ENCODE measurements at regions of chr4 and their contacts with region 1.

Region 1: DNA sequence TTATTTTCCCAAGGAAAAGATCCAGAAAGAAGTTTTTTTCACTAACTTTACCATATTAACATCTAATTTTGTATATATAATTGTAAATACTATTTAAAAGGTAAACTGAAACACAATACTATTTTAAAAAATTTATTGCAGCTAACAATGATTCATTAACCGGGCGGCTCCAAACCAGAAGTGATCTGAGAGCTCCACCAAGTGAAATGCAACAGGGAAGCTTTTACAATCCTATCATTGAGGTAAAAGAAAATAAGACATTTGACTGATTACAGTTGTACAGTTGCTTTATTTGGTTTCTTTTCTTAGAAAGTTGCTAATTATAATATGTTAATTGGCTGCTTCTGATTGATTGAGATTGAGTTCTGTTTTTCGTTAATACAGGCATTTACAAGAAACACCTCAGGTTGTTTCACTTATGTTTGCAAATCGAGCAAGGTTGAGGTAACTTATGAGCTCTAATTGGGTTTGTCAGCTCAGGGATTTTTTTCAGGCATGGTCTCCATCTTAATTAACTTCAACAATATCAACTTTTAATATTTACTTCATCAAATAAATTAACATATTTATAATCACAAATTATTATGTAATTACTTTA is 220.2 kb upstream of the UGT8 start:
- DNase-seq: peak; percentile 32
- H3K4me3 ChIP-seq: no peak overlapping the region
- H3K27ac ChIP-seq: peak overlapping the region in 1 of 2 experiments; percentile 42; a peak in 1 of 4 replicates
- H3K4me1 ChIP-seq: peaks cover 0 to 15% of the 10 kb centered on the region in 2 experiments; a peak in 3 of 4 replicates
- H3K27me3 ChIP-seq: no peaks in the 10 kb centered on the region
- CTCF ChIP-seq: peak; percentile 88
- EP300 ChIP-seq: no peak
- RAD21 ChIP-seq: peak; percentile 96

Region 2: GRCh38 chr4:113394730-113395530 is 983.5 kb before region 1 on chr4:
- CTCF ChIA-PET with region 1: interaction called, 47 read pairs
- POLR2A ChIA-PET with region 1: no interaction called
- DNase-seq: peak; percentile 47
- H3K4me3 ChIP-seq: no peak overlapping the region; a peak in 1 of 4 replicates
- H3K27ac ChIP-seq: no peak overlapping the region
- H3K4me1 ChIP-seq: no peaks in the 10 kb centered on the region
- H3K27me3 ChIP-seq: no peaks in the 10 kb centered on the region
- CTCF ChIP-seq: peak; percentile 82
- EP300 ChIP-seq: peak in 1 of 2 experiments; percentile 75; a peak in 2 of 4 replicates
- RAD21 ChIP-seq: peak; percentile 99

Region 3: DNA sequence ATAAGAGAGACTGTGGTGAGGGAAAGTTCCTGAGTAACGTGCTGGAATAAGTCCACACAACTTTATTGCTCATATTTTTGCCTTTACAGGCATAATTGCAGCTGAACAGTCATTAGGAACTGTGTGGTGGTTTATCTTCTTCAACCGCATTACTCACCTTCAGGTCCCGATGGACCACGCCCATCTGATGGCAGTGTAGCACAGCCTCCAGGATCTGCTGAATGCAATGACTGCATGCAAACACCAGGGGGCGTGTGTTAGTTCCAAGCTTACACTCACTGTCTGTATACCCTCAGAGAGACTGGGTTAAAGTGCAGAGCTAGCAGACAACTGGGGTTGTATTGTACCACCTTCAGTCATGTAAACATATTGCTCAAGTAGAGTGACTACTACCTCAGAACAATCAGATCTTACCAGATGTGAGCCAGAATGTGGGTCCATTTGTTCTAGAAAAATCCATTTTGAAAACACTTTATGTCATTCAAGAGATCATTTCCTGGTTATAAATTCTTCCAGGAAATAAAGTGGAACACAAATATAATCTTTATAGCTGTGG is 830.8 kb before region 1 on chr4:
- CTCF ChIA-PET with region 1: interaction called, 10 read pairs
- POLR2A ChIA-PET with region 1: no interaction called
- DNase-seq: peak; percentile 67
- H3K4me3 ChIP-seq: no peak overlapping the region; a peak in 1 of 4 replicates
- H3K27ac ChIP-seq: peak overlapping the region in 1 of 2 experiments; percentile 25; a peak in 3 of 4 replicates
- H3K4me1 ChIP-seq: peaks cover 2 to 8% of the 10 kb centered on the region in 2 experiments; a peak in 3 of 4 replicates
- H3K27me3 ChIP-seq: no peaks in the 10 kb centered on the region
- CTCF ChIP-seq: peak; percentile 97
- EP300 ChIP-seq: no peak
- RAD21 ChIP-seq: peak; percentile 89

Region 4: GRCh38 chr4:113952452-113953029 is 425.9 kb before region 1 on chr4:
- CTCF ChIA-PET with region 1: interaction called, 17 read pairs
- POLR2A ChIA-PET with region 1: no interaction called
- DNase-seq: peak; percentile 22
- H3K4me3 ChIP-seq: no peak overlapping the region
- H3K27ac ChIP-seq: peak overlapping the region in 1 of 2 experiments; percentile 15; a peak in 2 of 4 replicates
- H3K4me1 ChIP-seq: peaks cover 2 to 54% of the 10 kb centered on the region in 2 experiments; a peak in 3 of 4 replicates
- H3K27me3 ChIP-seq: no peaks in the 10 kb centered on the region
- CTCF ChIP-seq: peak; percentile 73
- EP300 ChIP-seq: no peak
- RAD21 ChIP-seq: peak; percentile 87

Region 5: GRCh38 chr4:113979148-113979904 is 399.1 kb before region 1 on chr4 and contains the start of gene ARSJ:
- CTCF ChIA-PET with region 1: interaction called, 11 read pairs
- POLR2A ChIA-PET with region 1: no interaction called
- DNase-seq: peak; percentile 76
- H3K4me3 ChIP-seq: peak within 1 kb of the TSS; percentile 73 to 86
- H3K27ac ChIP-seq: peak within 1 kb of the TSS; percentile 91 to 95
- H3K4me1 ChIP-seq: peaks cover 0 to 5% of the 10 kb centered on the region in 2 experiments; a peak in 3 of 4 replicates
- H3K27me3 ChIP-seq: no peaks in the 10 kb centered on the region
- CTCF ChIP-seq: 0 out of 2 replicates have a peak, but pooled peaks have one; percentile 16
- EP300 ChIP-seq: peak in 1 of 2 experiments; percentile 11; a peak in 1 of 4 replicates
- RAD21 ChIP-seq: peak; percentile 7; the same call in 1 of the 2 replicates
- polyA plus RNA-seq, gene ARSJ: 30.4 and 41.4 TPM in 2 replicates

Region 6: GRCh38 chr4:114296126-114296525 is 82.3 kb before region 1 on chr4:
- CTCF ChIA-PET with region 1: no interaction called
- POLR2A ChIA-PET with region 1: no interaction called
- DNase-seq: no peak
- H3K4me3 ChIP-seq: no peak overlapping the region
- H3K27ac ChIP-seq: no peak overlapping the region
- H3K4me1 ChIP-seq: no peaks in the 10 kb centered on the region
- H3K27me3 ChIP-seq: no peaks in the 10 kb centered on the region
- CTCF ChIP-seq: no peak
- EP300 ChIP-seq: no peak
- RAD21 ChIP-seq: no peak

Measured in SK-N-SH (cell line).